A549 (cell line): ENCODE measurements at regions of chr15 and their contacts with region 1.

Region 1: DNA sequence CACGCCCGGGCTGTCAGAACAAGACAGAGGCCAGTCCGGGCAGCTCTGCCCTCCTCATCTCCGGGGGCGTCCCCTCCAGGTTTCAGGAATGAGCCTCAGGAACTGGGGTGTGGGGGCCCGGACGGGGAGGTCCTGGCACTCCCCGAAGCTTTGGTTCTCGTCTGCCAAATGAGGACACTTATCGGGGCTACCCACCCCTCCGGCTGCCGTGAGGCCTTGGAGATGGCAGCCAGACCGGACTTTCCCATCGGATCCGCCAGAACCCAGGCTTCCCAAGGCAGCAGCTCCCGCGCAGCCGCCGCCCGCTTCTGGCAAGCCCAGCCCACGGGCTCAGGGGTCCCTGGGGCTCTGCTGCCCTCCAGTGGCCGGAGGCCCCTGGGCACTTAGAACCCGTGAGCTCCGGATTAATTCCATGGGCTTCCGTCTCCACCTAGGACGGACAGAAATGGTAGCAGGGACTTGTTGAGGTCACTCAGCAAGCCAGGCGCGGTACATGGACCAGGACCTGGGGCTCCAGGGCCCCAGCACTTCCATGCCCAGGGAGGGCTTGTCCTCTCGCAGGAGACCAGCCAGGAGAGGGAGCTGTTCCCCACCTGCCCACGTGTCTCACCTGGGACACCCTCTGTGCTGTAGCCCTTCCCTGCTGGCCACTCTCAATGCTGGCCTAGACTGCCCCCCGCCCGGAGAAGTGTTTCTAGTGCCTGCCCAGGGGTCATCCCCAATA is 89.4 kb downstream of the LINGO1 start:
- DNase-seq: peak; percentile 89 to 97
- ATAC-seq: peak; percentile 82 to 95
- H3K4me3 ChIP-seq: peak overlapping the region; percentile 57
- H3K27ac ChIP-seq: peak overlapping the region; percentile 79 to 93
- H3K4me1 ChIP-seq: peaks cover 18% of the 10 kb centered on the region
- CTCF ChIP-seq: peak; percentile 100
- EP300 ChIP-seq: no peak
- POLR2A ChIP-seq: peak; percentile 83
- RAD21 ChIP-seq: peak; percentile 89 to 93

Region 2: GRCh38 chr15:77112838-77113504 is 430.4 kb before region 1 on chr15:
- CTCF ChIA-PET with region 1: interaction called, 88 read pairs
- POLR2A ChIA-PET with region 1: no interaction called
- DNase-seq: no peak
- ATAC-seq: peak; percentile 45 to 79; a peak in 4 of 6 replicates
- H3K4me3 ChIP-seq: no peak overlapping the region
- H3K27ac ChIP-seq: no peak overlapping the region
- H3K4me1 ChIP-seq: no peaks in the 10 kb centered on the region
- CTCF ChIP-seq: no peak
- EP300 ChIP-seq: no peak
- POLR2A ChIP-seq: no peak
- RAD21 ChIP-seq: no peak

Region 3: GRCh38 chr15:77186594-77187011 is 356.7 kb before region 1 on chr15:
- CTCF ChIA-PET with region 1: interaction called, 49 read pairs
- POLR2A ChIA-PET with region 1: interaction called, 5 read pairs
- DNase-seq: peak in 1 of 2 experiments; percentile 42
- ATAC-seq: peak in 1 of 2 experiments; percentile 50; a peak in 1 of 6 replicates
- H3K4me3 ChIP-seq: no peak overlapping the region
- H3K27ac ChIP-seq: no peak overlapping the region
- H3K4me1 ChIP-seq: peaks cover 5% of the 10 kb centered on the region; the same call in 1 of the 3 replicates
- CTCF ChIP-seq: peak; percentile 63
- EP300 ChIP-seq: no peak
- POLR2A ChIP-seq: no peak
- RAD21 ChIP-seq: peak; percentile 77 to 78

Region 4: GRCh38 chr15:77347208-77347607 is 196.1 kb before region 1 on chr15:
- CTCF ChIA-PET with region 1: no interaction called
- POLR2A ChIA-PET with region 1: no interaction called
- DNase-seq: no peak
- ATAC-seq: no peak
- H3K4me3 ChIP-seq: no peak overlapping the region
- H3K27ac ChIP-seq: no peak overlapping the region
- H3K4me1 ChIP-seq: no peaks in the 10 kb centered on the region
- CTCF ChIP-seq: no peak
- EP300 ChIP-seq: no peak
- POLR2A ChIP-seq: no peak
- RAD21 ChIP-seq: no peak

Region 5: DNA sequence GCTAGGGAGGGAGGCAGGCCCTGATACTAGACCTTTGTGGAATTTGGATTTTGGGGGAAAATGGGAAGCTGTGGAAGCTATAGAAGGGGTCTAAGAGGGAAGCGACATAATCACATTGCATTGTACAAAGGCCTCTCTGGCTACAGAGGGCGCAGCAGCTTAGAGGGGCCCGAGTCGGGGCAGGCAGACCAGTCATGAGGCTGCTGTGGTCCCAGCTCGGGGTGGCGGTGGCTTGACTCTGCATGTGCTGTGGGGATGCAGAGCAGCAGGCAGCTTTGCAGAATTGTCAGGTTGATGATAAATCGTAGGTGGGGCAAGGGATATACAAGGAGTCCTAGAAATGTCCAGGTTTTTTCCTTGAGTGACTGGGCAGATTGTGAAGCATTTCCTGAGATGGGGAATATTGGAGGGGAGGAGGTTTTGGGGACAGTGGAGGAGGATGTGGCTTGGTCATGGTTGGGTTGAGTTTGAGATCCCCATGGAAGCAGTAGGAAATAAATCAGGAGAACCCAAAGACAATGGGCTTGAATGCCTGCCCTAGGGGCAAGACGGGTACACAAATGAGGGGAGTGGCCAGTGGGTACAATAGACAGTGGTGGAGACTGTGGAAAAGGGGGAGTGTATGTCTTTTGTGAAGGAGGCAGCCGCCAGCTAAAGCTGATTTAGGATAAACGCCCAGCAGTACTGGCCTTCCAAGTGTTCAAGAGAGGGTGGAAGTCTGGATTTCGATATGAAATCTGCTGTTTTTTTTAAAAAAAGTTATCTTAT is 28.5 kb before region 1 on chr15:
- CTCF ChIA-PET with region 1: interaction called, 26 read pairs
- POLR2A ChIA-PET with region 1: interaction called, 3 read pairs
- DNase-seq: no peak
- ATAC-seq: no peak; a peak in 1 of 6 replicates
- H3K4me3 ChIP-seq: no peak overlapping the region
- H3K27ac ChIP-seq: no peak overlapping the region
- H3K4me1 ChIP-seq: no peaks in the 10 kb centered on the region
- CTCF ChIP-seq: no peak
- EP300 ChIP-seq: no peak
- POLR2A ChIP-seq: no peak
- RAD21 ChIP-seq: no peak

Region 6: DNA sequence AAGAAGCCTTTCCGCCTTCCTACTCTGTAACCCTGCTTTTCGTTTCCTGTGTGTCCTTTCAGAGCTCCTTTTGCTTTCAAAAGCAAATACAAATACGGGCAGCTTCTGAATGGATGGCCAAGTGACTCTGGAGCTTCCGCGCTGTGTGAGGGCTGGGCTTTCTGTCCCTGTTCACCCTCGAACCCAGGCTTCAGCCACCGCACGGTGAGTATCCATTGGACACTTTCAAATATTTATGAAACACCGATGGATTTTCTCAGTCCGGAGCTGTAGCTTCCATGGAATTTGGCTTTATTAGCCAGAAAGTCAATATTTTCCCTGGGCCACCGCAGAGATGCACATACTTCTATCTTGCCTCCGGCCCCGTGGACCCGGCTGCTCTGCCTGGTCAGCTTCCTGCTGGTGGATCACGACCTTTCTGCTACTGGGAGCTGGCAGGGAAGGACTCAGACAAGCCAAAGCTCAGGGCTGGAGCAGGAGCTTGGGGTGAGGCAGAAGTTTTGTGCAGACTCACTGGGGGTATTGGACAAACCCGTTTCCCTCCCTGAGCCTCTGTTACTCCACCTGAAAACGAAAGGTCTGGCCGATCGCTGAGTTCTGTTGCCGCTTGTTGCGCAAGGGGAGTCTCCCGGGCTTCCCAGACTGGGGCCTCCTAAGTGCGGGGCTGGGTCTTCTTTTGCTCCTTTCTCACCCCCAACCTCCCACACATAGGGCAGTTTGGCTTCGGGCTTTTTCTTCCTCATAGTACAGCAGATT is 25.8 kb after region 1 on chr15:
- CTCF ChIA-PET with region 1: interaction called, 70 read pairs
- POLR2A ChIA-PET with region 1: no interaction called
- DNase-seq: no peak
- ATAC-seq: peak in 1 of 2 experiments; percentile 53; a peak in 3 of 6 replicates
- H3K4me3 ChIP-seq: no peak overlapping the region
- H3K27ac ChIP-seq: no peak overlapping the region
- H3K4me1 ChIP-seq: no peaks in the 10 kb centered on the region
- CTCF ChIP-seq: no peak
- EP300 ChIP-seq: no peak
- POLR2A ChIP-seq: no peak
- RAD21 ChIP-seq: no peak

Region 7: DNA sequence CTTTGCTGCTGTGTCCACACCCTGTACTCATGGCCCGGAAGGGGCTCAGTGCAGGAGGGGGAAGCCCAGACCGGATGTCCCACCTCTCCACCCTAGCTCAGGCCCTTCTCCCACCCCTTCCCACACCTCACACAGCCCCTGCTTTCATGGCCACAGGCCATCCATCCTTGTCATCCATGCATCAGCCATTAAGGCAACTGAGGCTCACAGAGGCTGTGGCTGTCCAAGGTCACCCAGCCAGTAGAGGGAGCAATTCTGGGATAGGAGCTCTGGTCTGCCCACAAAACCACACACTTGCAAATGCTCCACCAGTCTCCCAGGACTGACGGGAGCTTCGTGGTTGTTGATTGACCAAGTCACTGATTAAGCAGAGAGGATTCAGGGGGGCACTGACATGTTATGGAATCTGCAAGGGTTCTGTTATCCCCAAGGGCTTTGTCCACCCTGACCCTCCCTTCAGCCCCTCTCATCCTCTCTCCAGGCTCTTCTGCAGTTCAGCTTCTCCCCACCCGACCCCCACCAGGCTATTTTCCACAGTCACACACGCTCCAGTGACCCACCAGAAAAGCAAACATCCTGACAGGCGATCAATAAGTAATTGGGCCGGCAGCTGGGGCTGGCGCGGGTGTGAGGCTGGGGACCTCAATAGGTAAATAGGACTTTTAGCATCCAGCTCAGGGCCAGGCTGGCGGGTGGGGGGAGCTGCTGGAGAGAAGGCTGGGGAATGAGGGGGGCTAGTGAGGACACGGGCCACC is 74.3 kb after region 1 on chr15:
- CTCF ChIA-PET with region 1: interaction called, 11 read pairs
- POLR2A ChIA-PET with region 1: no interaction called
- DNase-seq: peak; percentile 60 to 69
- ATAC-seq: peak; percentile 47 to 84; a peak in 4 of 6 replicates
- H3K4me3 ChIP-seq: no peak overlapping the region
- H3K27ac ChIP-seq: no peak overlapping the region
- H3K4me1 ChIP-seq: no peaks in the 10 kb centered on the region; the same call in 2 of the 3 replicates
- CTCF ChIP-seq: peak; percentile 52
- EP300 ChIP-seq: no peak
- POLR2A ChIP-seq: no peak
- RAD21 ChIP-seq: no peak

Region 8: GRCh38 chr15:77650265-77650664 is 106.9 kb after region 1 on chr15:
- CTCF ChIA-PET with region 1: no interaction called
- POLR2A ChIA-PET with region 1: no interaction called
- DNase-seq: peak; percentile 41 to 46
- ATAC-seq: peak; percentile 41 to 79; a peak in 3 of 6 replicates
- H3K4me3 ChIP-seq: no peak overlapping the region
- H3K27ac ChIP-seq: no peak overlapping the region
- H3K4me1 ChIP-seq: no peaks in the 10 kb centered on the region
- CTCF ChIP-seq: peak; percentile 44
- EP300 ChIP-seq: no peak
- POLR2A ChIP-seq: no peak
- RAD21 ChIP-seq: peak; percentile 21 to 22; a peak in 1 of 5 replicates

Region 9: DNA sequence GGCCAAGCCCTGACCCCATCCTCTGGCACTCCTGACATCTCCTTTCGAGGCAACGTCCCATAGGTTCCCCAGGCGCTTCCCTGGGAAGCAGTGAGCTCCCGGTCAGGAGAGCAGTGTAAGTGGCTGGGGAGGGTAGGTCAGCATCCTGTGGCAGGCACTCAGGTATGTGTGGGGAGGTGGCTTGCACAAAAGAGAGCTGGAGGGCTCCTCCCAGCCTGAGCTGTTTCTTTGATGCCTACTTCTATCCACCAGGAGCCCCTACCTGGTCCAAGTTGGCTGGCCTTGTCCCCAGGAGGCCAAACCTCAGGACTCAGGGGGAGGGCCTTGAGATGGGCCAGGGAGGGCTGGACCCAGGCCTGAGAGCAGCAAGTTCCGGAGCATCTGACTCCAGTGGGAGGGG is 121.1 kb after region 1 on chr15:
- CTCF ChIA-PET with region 1: no interaction called
- POLR2A ChIA-PET with region 1: no interaction called
- DNase-seq: no peak
- ATAC-seq: no peak
- H3K4me3 ChIP-seq: no peak overlapping the region
- H3K27ac ChIP-seq: no peak overlapping the region
- H3K4me1 ChIP-seq: no peaks in the 10 kb centered on the region
- CTCF ChIP-seq: no peak
- EP300 ChIP-seq: no peak
- POLR2A ChIP-seq: no peak
- RAD21 ChIP-seq: no peak

Region 10: GRCh38 chr15:77810130-77810571 is 266.8 kb after region 1 on chr15:
- CTCF ChIA-PET with region 1: no interaction called
- POLR2A ChIA-PET with region 1: no interaction called
- DNase-seq: no peak
- ATAC-seq: no peak; a peak in 1 of 6 replicates
- H3K4me3 ChIP-seq: no peak overlapping the region
- H3K27ac ChIP-seq: no peak overlapping the region
- H3K4me1 ChIP-seq: no peaks in the 10 kb centered on the region
- CTCF ChIP-seq: no peak
- EP300 ChIP-seq: no peak
- POLR2A ChIP-seq: no peak
- RAD21 ChIP-seq: no peak